Activated CD4-positive, alpha-beta T cell treated with anti-CD3 and anti-CD28 coated beads, Interleukin-2, amount 10 ng/mL, durations not matched to agents 7 days and 5 days (primary cell): ENCODE measurements at regions of chr11 and their contacts with region 1.

Region 1: DNA sequence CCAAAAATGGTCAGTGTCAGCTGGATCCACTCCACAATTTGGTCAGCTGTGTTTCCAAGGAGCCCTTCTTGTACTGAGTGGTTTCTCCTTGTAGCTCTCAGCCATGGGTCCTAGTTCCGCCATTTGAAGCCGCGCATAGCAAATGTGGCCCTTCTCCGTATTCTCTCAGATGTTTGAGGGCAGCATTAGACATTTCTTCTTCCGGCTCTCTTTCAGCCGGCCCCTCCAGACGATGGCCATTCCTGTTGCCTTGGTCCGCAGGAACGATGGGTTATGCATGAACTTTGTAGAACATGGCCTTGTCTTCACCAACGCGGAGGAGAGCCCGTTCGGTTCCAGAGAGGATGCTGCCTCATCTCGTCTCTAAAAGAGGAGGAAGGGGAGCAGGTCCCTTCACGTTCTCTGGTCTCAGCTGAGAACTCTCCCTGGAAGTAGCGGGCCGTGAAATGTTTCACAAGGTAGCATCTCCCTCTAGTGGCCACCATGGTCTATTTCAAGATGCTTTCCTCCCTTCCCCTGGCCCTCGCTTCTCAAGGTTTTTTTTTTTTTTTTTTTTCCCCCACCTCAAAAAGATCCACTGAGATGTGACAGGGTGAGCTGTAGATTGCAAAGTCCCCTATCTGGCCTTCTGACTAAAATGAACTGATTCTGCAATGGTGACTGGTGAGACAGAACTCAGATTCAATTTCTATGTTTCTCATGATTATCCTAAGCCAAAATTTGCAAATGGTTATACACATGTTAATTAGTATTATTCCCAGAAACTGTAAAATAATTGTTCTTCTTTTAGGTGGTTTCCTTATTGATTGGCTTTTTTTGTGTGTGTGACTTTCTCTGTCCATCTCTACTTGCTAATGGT is 19.8 kb upstream of the PLET1 start:
- DNase-seq: peak; percentile 81
- H3K4me3 Mint-ChIP-seq: peak overlapping the region; percentile 76
- H3K27ac Mint-ChIP-seq: peak overlapping the region; percentile 70
- H3K4me1 Mint-ChIP-seq: peaks cover 38% of the 10 kb centered on the region
- H3K27me3 Mint-ChIP-seq: no peaks in the 10 kb centered on the region

Region 2: GRCh38 chr11:112219476-112220232 is 60.8 kb before region 1 on chr11:
- CTCF ChIA-PET with region 1: interaction called, 33 read pairs
- POLR2A ChIA-PET with region 1: no interaction called
- DNase-seq: peak; percentile 67
- H3K4me3 Mint-ChIP-seq: no peak overlapping the region
- H3K27ac Mint-ChIP-seq: peak overlapping the region; percentile 41
- H3K4me1 Mint-ChIP-seq: peaks cover 7% of the 10 kb centered on the region
- H3K27me3 Mint-ChIP-seq: peaks cover 9% of the 10 kb centered on the region

Region 3: GRCh38 chr11:112226062-112226830 is 54.3 kb before region 1 on chr11 and contains the start of gene PTS:
- CTCF ChIA-PET with region 1: interaction called, 33 read pairs
- POLR2A ChIA-PET with region 1: no interaction called
- DNase-seq: peak; percentile 85
- H3K4me3 Mint-ChIP-seq: peak within 1 kb of the TSS; percentile 82
- H3K27ac Mint-ChIP-seq: peak within 1 kb of the TSS; percentile 98
- H3K4me1 Mint-ChIP-seq: peaks cover 30% of the 10 kb centered on the region
- H3K27me3 Mint-ChIP-seq: peaks cover 7% of the 10 kb centered on the region
- total RNA-seq, gene PTS: 18.6 to 19.8 TPM

Region 4: GRCh38 chr11:112235750-112236390 is 44.6 kb before region 1 on chr11:
- CTCF ChIA-PET with region 1: interaction called, 18 read pairs
- POLR2A ChIA-PET with region 1: no interaction called
- DNase-seq: no peak
- H3K4me3 Mint-ChIP-seq: no peak overlapping the region
- H3K27ac Mint-ChIP-seq: no peak overlapping the region
- H3K4me1 Mint-ChIP-seq: no peaks in the 10 kb centered on the region
- H3K27me3 Mint-ChIP-seq: no peaks in the 10 kb centered on the region